Naive thymus-derived CD4-positive, alpha-beta T cell (primary cell): ENCODE measurements at regions of chr4 and their contacts with region 1.

Region 1: GRCh38 chr4:83484500-83485461 is at the start of gene ABRAXAS1:
- DNase-seq: peak; percentile 91 to 97 (median 96)
- ATAC-seq: peak; percentile 98
- H3K4me3 ChIP-seq: peak within 1 kb of the TSS; percentile 93
- H3K4me3 Mint-ChIP-seq: peak within 1 kb of the TSS; percentile 92 to 99 (median 98)
- H3K27ac ChIP-seq: peak within 1 kb of the TSS; percentile 86
- H3K27ac Mint-ChIP-seq: peak within 1 kb of the TSS; percentile 93 to 99 (median 98)
- H3K4me1 ChIP-seq: peaks cover 4 to 11% of the 10 kb centered on the region in 2 donors
- H3K4me1 Mint-ChIP-seq: peaks cover 15 to 49% (median 36%) of the 10 kb centered on the region in 7 donors
- H3K27me3 ChIP-seq: no peaks in the 10 kb centered on the region
- H3K27me3 Mint-ChIP-seq: peaks cover 0 to under 1% (median 0%) of the 10 kb centered on the region in 5 donors
- total RNA-seq, gene ABRAXAS1: 13.9 to 47.6 (median 24.9) TPM

Region 2: GRCh38 chr4:82284858-82285805 is 1199.6 kb before region 1 on chr4:
- CTCF ChIA-PET with region 1: no interaction called
- POLR2A ChIA-PET with region 1: no interaction called
- intact Hi-C with region 1: loop called (anchors 2 to 10 kb)
- DNase-seq: peak; percentile 97 to 100 (median 99)
- ATAC-seq: peak; percentile 94
- H3K4me3 ChIP-seq: peak overlapping the region; percentile 55
- H3K4me3 Mint-ChIP-seq: peak overlapping the region; percentile 70 to 91 (median 86)
- H3K27ac ChIP-seq: peak overlapping the region; percentile 71
- H3K27ac Mint-ChIP-seq: peak overlapping the region; percentile 53 to 94 (median 83)
- H3K4me1 ChIP-seq: peaks cover 4 to 11% of the 10 kb centered on the region in 2 donors
- H3K4me1 Mint-ChIP-seq: peaks cover 9 to 22% (median 13%) of the 10 kb centered on the region in 7 donors
- H3K27me3 ChIP-seq: no peaks in the 10 kb centered on the region
- H3K27me3 Mint-ChIP-seq: peaks cover 0 to 28% (median 0%) of the 10 kb centered on the region in 5 donors

Region 3: GRCh38 chr4:82677321-82677720 is 807.5 kb before region 1 on chr4:
- CTCF ChIA-PET with region 1: no interaction called
- POLR2A ChIA-PET with region 1: no interaction called
- intact Hi-C with region 1: no loop called
- DNase-seq: no peak
- ATAC-seq: no peak
- H3K4me3 ChIP-seq: no peak overlapping the region
- H3K4me3 Mint-ChIP-seq: no peak overlapping the region
- H3K27ac ChIP-seq: no peak overlapping the region
- H3K27ac Mint-ChIP-seq: no peak overlapping the region
- H3K4me1 ChIP-seq: no peaks in the 10 kb centered on the region
- H3K4me1 Mint-ChIP-seq: no peaks in the 10 kb centered on the region
- H3K27me3 ChIP-seq: no peaks in the 10 kb centered on the region
- H3K27me3 Mint-ChIP-seq: peaks cover 5 to 21% (median 13%) of the 10 kb centered on the region in 5 donors

Region 4: GRCh38 chr4:82900331-82901128 is 584.3 kb before region 1 on chr4 and contains the start of gene THAP9:
- CTCF ChIA-PET with region 1: no interaction called
- POLR2A ChIA-PET with region 1: no interaction called
- intact Hi-C with region 1: loop called in 1 of 2 experiments (anchors 1 kb)
- DNase-seq: peak; percentile 92 to 100 (median 98)
- ATAC-seq: peak; percentile 91
- H3K4me3 ChIP-seq: peak within 1 kb of the TSS; percentile 91
- H3K4me3 Mint-ChIP-seq: no peak within 1 kb of the TSS
- H3K27ac ChIP-seq: peak within 1 kb of the TSS; percentile 98
- H3K27ac Mint-ChIP-seq: no peak within 1 kb of the TSS
- H3K4me1 ChIP-seq: peaks cover 13 to 15% of the 10 kb centered on the region in 2 donors
- H3K4me1 Mint-ChIP-seq: peaks cover 0 to 30% (median 15%) of the 10 kb centered on the region in 7 donors
- H3K27me3 ChIP-seq: no peaks in the 10 kb centered on the region
- H3K27me3 Mint-ChIP-seq: peaks cover 0 to 2% (median 0%) of the 10 kb centered on the region in 5 donors
- total RNA-seq, gene THAP9: 2.2 to 4.9 (median 4.4) TPM

Region 5: GRCh38 chr4:83028976-83029375 is 455.8 kb before region 1 on chr4:
- CTCF ChIA-PET with region 1: no interaction called
- POLR2A ChIA-PET with region 1: no interaction called
- intact Hi-C with region 1: no loop called
- DNase-seq: no peak
- ATAC-seq: no peak
- H3K4me3 ChIP-seq: no peak overlapping the region
- H3K4me3 Mint-ChIP-seq: no peak overlapping the region
- H3K27ac ChIP-seq: no peak overlapping the region
- H3K27ac Mint-ChIP-seq: no peak overlapping the region
- H3K4me1 ChIP-seq: no peaks in the 10 kb centered on the region
- H3K4me1 Mint-ChIP-seq: peaks cover 0 to 6% (median 0%) of the 10 kb centered on the region in 7 donors
- H3K27me3 ChIP-seq: no peaks in the 10 kb centered on the region
- H3K27me3 Mint-ChIP-seq: peaks cover 0 to 26% (median 3%) of the 10 kb centered on the region in 5 donors

Region 6: GRCh38 chr4:83498187-83498586 is 13.4 kb after region 1 on chr4:
- CTCF ChIA-PET with region 1: interaction called, 4 read pairs
- POLR2A ChIA-PET with region 1: interaction called, 21 read pairs
- intact Hi-C with region 1: no loop called
- DNase-seq: no peak
- ATAC-seq: no peak
- H3K4me3 ChIP-seq: no peak overlapping the region
- H3K4me3 Mint-ChIP-seq: no peak overlapping the region
- H3K27ac ChIP-seq: no peak overlapping the region
- H3K27ac Mint-ChIP-seq: peak overlapping the region in 2 of 9 donors; percentile 28 to 38
- H3K4me1 ChIP-seq: no peaks in the 10 kb centered on the region
- H3K4me1 Mint-ChIP-seq: peaks cover 0 to 8% (median 0%) of the 10 kb centered on the region in 7 donors
- H3K27me3 ChIP-seq: no peaks in the 10 kb centered on the region
- H3K27me3 Mint-ChIP-seq: peaks cover 0 to 3% (median 0%) of the 10 kb centered on the region in 5 donors

Region 7: GRCh38 chr4:83535520-83536361 is 51.0 kb after region 1 on chr4 and contains the start of gene GPAT3:
- CTCF ChIA-PET with region 1: no interaction called
- POLR2A ChIA-PET with region 1: interaction called, 16 read pairs
- intact Hi-C with region 1: loop called (anchors 1 to 2 kb)
- DNase-seq: peak; percentile 37 to 76 (median 58)
- ATAC-seq: peak; percentile 89
- H3K4me3 ChIP-seq: peak within 1 kb of the TSS; percentile 80
- H3K4me3 Mint-ChIP-seq: peak within 1 kb of the TSS; percentile 87 to 97 (median 90)
- H3K27ac ChIP-seq: peak within 1 kb of the TSS; percentile 56
- H3K27ac Mint-ChIP-seq: peak within 1 kb of the TSS; percentile 24 to 92 (median 73)
- H3K4me1 ChIP-seq: peaks cover 0 to 8% of the 10 kb centered on the region in 2 donors
- H3K4me1 Mint-ChIP-seq: peaks cover 13 to 37% (median 17%) of the 10 kb centered on the region in 7 donors
- H3K27me3 ChIP-seq: no peaks in the 10 kb centered on the region
- H3K27me3 Mint-ChIP-seq: peaks cover 0 to 59% (median 20%) of the 10 kb centered on the region in 5 donors
- total RNA-seq, gene GPAT3: 3.0 to 14.6 (median 5.8) TPM

Region 8: DNA sequence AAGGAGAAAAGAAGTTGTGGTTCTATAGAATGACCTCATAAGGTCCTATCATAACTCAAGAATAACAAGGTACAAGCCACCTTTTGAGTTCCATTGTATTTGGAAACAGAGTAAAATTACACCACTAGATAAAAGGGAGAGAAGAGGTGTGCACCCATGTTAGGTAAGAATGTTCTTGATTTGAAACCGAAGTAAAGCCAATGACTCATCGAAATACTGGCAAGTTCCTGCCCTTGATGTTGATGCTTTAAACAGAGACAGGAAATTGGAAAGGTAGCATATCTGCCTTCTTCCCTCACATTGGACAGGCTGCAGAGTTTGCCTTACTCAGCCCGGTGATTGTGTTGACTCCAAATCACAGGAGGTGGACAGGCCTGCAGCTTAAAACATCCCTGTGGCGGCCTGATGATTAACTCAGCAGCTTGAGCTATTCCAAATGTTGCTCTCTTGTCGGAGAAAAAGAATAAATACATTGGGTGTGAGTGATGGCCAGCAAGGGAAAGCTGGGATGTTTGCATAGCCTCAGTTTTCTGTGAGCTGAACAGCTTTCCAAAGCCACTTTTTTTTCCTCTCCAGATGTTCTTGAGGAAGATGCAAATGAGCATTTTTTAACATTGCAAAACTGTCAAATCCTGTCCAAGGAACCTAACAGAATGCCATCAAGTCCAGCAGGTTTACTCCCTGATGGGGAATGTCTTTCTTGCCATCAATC is 693.2 kb after region 1 on chr4:
- CTCF ChIA-PET with region 1: no interaction called
- POLR2A ChIA-PET with region 1: no interaction called
- intact Hi-C with region 1: no loop called
- DNase-seq: no peak
- ATAC-seq: no peak
- H3K4me3 ChIP-seq: no peak overlapping the region
- H3K4me3 Mint-ChIP-seq: no peak overlapping the region
- H3K27ac ChIP-seq: no peak overlapping the region
- H3K27ac Mint-ChIP-seq: no peak overlapping the region
- H3K4me1 ChIP-seq: no peaks in the 10 kb centered on the region
- H3K4me1 Mint-ChIP-seq: no peaks in the 10 kb centered on the region
- H3K27me3 ChIP-seq: no peaks in the 10 kb centered on the region
- H3K27me3 Mint-ChIP-seq: no peaks in the 10 kb centered on the region

Region 9: DNA sequence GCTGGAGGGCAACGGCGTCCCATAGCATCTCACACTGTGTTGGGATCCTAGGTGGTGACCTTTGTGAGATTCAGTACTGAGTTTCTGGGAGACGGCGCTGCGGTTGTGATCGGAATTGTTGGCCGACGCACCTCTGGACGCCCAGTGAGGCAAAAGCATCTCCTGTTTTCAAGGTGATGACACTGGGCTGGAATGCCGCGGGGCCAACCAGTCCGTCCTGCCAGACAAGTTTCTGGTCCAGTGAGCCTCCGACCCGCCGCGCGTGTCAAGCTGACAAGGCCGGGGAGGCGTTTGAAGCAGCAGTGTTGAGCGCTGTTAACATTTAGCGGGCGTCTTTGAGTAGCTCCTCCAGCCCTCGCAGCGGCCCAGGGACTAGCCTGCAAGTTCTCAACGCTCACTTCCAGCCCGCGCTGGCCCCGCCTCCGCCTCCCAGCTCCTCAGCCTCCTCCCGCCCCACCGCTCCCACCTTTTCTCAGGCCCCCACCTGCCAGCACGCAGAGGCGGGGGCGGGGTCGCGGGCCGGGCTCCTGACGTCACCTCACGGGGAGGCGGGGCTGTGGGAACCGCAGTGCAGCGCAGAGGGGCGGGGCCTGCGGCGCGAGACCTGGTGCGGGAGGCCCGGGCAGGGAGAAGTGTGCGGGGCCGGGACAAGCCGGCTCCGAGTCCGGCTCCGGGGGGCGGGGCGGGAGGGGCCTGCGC is 1097.7 kb after region 1 on chr4:
- CTCF ChIA-PET with region 1: no interaction called
- POLR2A ChIA-PET with region 1: no interaction called
- intact Hi-C with region 1: loop called (anchors 1 to 10 kb)
- DNase-seq: peak; percentile 88 to 96 (median 91)
- ATAC-seq: peak; percentile 93
- H3K4me3 ChIP-seq: peak overlapping the region; percentile 61
- H3K4me3 Mint-ChIP-seq: peak overlapping the region; percentile 67 to 90 (median 85)
- H3K27ac ChIP-seq: peak overlapping the region; percentile 62
- H3K27ac Mint-ChIP-seq: peak overlapping the region in 6 of 9 donors; percentile 38 to 83 (median 50)
- H3K4me1 ChIP-seq: peaks cover 5% of the 10 kb centered on the region in 2 donors
- H3K4me1 Mint-ChIP-seq: peaks cover 9 to 26% (median 17%) of the 10 kb centered on the region in 7 donors
- H3K27me3 ChIP-seq: no peaks in the 10 kb centered on the region
- H3K27me3 Mint-ChIP-seq: peaks cover 18 to 61% (median 36%) of the 10 kb centered on the region in 5 donors